ENCODE measurements at regions of chr9 and their contacts with region 1.

Region 1: GRCh38 chr9:98860871-98861293 is 53.4 kb downstream of the GALNT12 start:
- DNase-seq: peak; percentile 31 to 84
- H3K4me3 ChIP-seq: no peak overlapping the region
- H3K27ac ChIP-seq: peak overlapping the region in 3 of 5 donors; percentile 42 to 72 (median 72)
- H3K4me1 ChIP-seq: peaks cover 0 to 37% (median 11%) of the 10 kb centered on the region in 4 donors
- H3K27me3 ChIP-seq: no peaks in the 10 kb centered on the region
- CTCF ChIP-seq: peak in 5 of 7 experiments; percentile 29 to 50 (median 43)
- EP300 ChIP-seq: peak; percentile 68
- POLR2A ChIP-seq: no peak

Region 2: GRCh38 chr9:98962181-98962560 is 101.3 kb after region 1 on chr9:
- intact Hi-C with region 1: loop called (anchors 10 kb)
- DNase-seq: no peak
- H3K4me3 ChIP-seq: no peak overlapping the region
- H3K27ac ChIP-seq: peak overlapping the region in 4 of 5 donors; percentile 3 to 85 (median 76)
- H3K4me1 ChIP-seq: peaks cover 0 to 77% (median 57%) of the 10 kb centered on the region in 4 donors
- H3K27me3 ChIP-seq: no peaks in the 10 kb centered on the region
- CTCF ChIP-seq: no peak
- EP300 ChIP-seq: no peak
- POLR2A ChIP-seq: no peak

Region 3: GRCh38 chr9:98998441-98999151 is 137.7 kb after region 1 on chr9:
- intact Hi-C with region 1: loop called (anchors 5 kb)
- DNase-seq: peak; percentile 80 to 84
- H3K4me3 ChIP-seq: no peak overlapping the region
- H3K27ac ChIP-seq: peak overlapping the region; percentile 32 to 81 (median 71)
- H3K4me1 ChIP-seq: peaks cover 10 to 56% (median 36%) of the 10 kb centered on the region in 4 donors
- H3K27me3 ChIP-seq: no peaks in the 10 kb centered on the region
- CTCF ChIP-seq: peak in 5 of 7 experiments; percentile 84 to 88 (median 85)
- EP300 ChIP-seq: no peak
- POLR2A ChIP-seq: no peak

Region 4: DNA sequence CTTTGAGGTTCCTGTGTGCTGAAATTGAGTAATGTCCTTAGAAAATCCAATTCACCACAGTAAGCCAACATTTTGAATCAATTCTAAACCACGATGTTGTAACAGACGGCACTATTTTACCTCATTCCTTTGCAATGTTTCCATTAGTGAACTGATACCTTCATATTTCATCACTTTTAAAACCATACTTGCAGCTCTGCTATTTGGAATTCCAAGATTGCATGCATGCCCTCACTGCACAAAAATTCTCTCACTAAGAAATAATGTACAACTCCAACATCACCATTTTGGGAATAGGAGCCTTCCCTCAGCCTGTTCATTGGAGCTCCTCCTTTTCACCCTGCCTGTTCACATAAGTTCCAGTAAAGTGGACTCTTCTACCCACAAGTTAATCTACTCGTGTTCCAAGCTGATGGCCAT is 169.2 kb after region 1 on chr9:
- intact Hi-C with region 1: no loop called
- DNase-seq: no peak
- H3K4me3 ChIP-seq: no peak overlapping the region
- H3K27ac ChIP-seq: peak overlapping the region in 4 of 5 donors; percentile 59 to 67 (median 63)
- H3K4me1 ChIP-seq: no peaks in the 10 kb centered on the region
- H3K27me3 ChIP-seq: no peaks in the 10 kb centered on the region
- CTCF ChIP-seq: no peak
- EP300 ChIP-seq: no peak
- POLR2A ChIP-seq: no peak

Region 5: GRCh38 chr9:99173570-99174504 is 313.0 kb after region 1 on chr9:
- intact Hi-C with region 1: no loop called
- DNase-seq: peak in 1 of 2 donors; percentile 58
- H3K4me3 ChIP-seq: no peak overlapping the region
- H3K27ac ChIP-seq: no peak overlapping the region
- H3K4me1 ChIP-seq: no peaks in the 10 kb centered on the region
- H3K27me3 ChIP-seq: peaks cover 0 to 18% (median 0%) of the 10 kb centered on the region in 3 donors
- CTCF ChIP-seq: no peak
- EP300 ChIP-seq: no peak
- POLR2A ChIP-seq: no peak